ENCODE measurements at regions of chr13 and their contacts with region 1.

Region 1: DNA sequence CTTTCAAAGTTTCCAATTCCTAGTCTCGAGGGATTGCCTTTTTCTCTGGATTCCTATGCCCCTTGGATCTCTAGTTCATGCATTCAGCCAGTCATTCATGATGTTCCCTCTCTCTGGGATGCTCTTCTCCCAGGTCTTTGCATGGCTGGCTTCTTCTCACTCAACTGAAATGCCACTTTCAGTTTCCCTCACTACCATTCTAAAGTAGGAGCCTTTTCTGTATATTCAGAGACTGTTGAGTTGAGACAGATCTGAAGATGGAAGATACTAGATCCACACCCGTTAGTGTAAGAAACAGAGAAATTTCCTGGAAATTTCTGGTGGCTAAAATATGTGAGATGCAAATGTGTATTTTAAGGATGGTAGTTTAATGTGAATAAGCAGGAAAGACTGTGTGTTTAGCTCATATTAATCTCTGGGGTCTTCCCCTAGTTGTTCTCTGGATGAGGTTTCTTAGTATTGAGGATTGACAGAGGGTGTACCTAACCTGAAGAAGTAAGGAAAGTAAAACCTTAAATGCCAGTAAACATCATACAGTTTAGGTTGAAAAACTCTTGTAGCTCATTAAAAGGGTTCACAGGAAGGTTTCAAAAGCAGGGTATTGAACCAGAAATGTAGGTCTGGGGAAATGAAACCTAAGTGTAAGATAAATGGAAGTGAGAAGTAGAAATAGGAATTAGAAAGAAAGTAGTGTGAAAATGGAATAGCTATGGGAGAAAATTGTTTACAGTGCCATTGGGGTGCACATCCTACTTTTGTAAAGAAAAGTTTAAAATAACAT is 331.3 kb downstream of the NDFIP2 start:
- DNase-seq: peak; percentile 39
- ATAC-seq: peak; percentile 90
- H3K4me3 ChIP-seq: no peak overlapping the region
- H3K27ac ChIP-seq: peak overlapping the region; percentile 44
- H3K4me1 ChIP-seq: peaks cover 4% of the 10 kb centered on the region
- H3K27me3 ChIP-seq: no peaks in the 10 kb centered on the region
- CTCF ChIP-seq: no peak
- EP300 ChIP-seq: peak in 1 of 2 experiments; percentile 79; a peak in 2 of 4 replicates
- POLR2A ChIP-seq: no peak
- RAD21 ChIP-seq: no peak

Region 2: GRCh38 chr13:79667771-79668170 is 144.5 kb before region 1 on chr13:
- CTCF ChIA-PET with region 1: no interaction called
- POLR2A ChIA-PET with region 1: no interaction called
- RAD21 ChIA-PET with region 1: no interaction called
- SMC1A ChIA-PET with region 1: no interaction called
- in situ Hi-C with region 1: no loop called
- intact Hi-C with region 1: no loop called
- DNase-seq: no peak
- ATAC-seq: no peak
- H3K4me3 ChIP-seq: no peak overlapping the region
- H3K27ac ChIP-seq: no peak overlapping the region
- H3K4me1 ChIP-seq: no peaks in the 10 kb centered on the region
- H3K27me3 ChIP-seq: no peaks in the 10 kb centered on the region
- CTCF ChIP-seq: no peak
- EP300 ChIP-seq: no peak
- POLR2A ChIP-seq: no peak
- RAD21 ChIP-seq: no peak

Region 3: DNA sequence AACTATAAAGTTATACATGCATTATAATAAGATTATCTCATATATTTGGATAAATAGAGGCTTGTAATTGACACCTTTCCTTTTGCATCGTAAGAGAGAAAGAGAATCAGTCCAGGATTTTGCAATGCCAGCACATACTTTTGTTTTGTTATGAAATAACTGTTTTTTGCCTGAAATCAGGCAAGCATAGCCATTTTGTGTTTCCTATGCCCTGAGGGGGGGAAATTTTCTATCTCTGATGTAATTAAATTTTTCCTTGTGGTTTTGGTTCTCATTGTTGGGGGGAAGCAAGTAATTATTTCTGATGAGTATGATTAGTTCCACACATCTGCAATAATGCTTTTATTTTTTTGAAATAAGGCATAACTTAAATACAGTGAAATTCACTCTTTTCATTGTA is 101.9 kb before region 1 on chr13:
- CTCF ChIA-PET with region 1: no interaction called
- POLR2A ChIA-PET with region 1: no interaction called
- RAD21 ChIA-PET with region 1: no interaction called
- SMC1A ChIA-PET with region 1: no interaction called
- in situ Hi-C with region 1: no loop called
- intact Hi-C with region 1: no loop called
- DNase-seq: no peak
- ATAC-seq: no peak
- H3K4me3 ChIP-seq: no peak overlapping the region
- H3K27ac ChIP-seq: no peak overlapping the region
- H3K4me1 ChIP-seq: no peaks in the 10 kb centered on the region
- H3K27me3 ChIP-seq: no peaks in the 10 kb centered on the region; a peak in 1 of 4 replicates
- CTCF ChIP-seq: no peak
- EP300 ChIP-seq: no peak
- POLR2A ChIP-seq: no peak
- RAD21 ChIP-seq: no peak

Region 4: GRCh38 chr13:79782541-79783205 is 29.6 kb before region 1 on chr13:
- CTCF ChIA-PET with region 1: interaction called, 4 read pairs
- POLR2A ChIA-PET with region 1: interaction called, 4 read pairs
- RAD21 ChIA-PET with region 1: interaction called, 32 read pairs
- SMC1A ChIA-PET with region 1: interaction called, 21 read pairs
- in situ Hi-C with region 1: no loop called
- intact Hi-C with region 1: no loop called
- DNase-seq: no peak
- ATAC-seq: peak; percentile 88
- H3K4me3 ChIP-seq: no peak overlapping the region
- H3K27ac ChIP-seq: no peak overlapping the region
- H3K4me1 ChIP-seq: no peaks in the 10 kb centered on the region
- H3K27me3 ChIP-seq: no peaks in the 10 kb centered on the region
- CTCF ChIP-seq: no peak
- EP300 ChIP-seq: peak in 1 of 2 experiments; percentile 62; a peak in 1 of 4 replicates
- POLR2A ChIP-seq: no peak
- RAD21 ChIP-seq: no peak

Region 5: DNA sequence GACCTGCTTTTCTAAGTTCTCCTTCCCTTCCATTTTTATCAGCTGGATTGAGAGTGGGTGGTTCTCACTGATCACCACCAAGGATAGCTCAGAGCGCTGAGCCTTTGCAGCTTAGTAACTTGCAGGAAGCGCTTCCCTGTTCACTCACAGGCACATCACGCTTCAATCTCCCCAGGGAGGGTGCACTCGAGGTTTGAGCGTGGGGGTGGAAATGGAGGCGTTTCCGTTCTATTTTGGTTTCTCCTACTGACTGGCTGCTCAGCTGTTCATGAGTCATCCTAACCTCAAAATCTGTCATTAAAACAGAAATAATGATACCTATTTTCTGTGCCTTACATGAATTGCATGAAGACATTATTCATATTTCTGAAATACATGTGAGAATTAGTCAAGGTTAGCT is 236.5 kb after region 1 on chr13:
- CTCF ChIA-PET with region 1: interaction called, 5 read pairs
- POLR2A ChIA-PET with region 1: no interaction called
- RAD21 ChIA-PET with region 1: interaction called, 24 read pairs
- SMC1A ChIA-PET with region 1: interaction called, 11 read pairs
- in situ Hi-C with region 1: no loop called
- intact Hi-C with region 1: no loop called
- DNase-seq: peak; percentile 89
- ATAC-seq: peak; percentile 98
- H3K4me3 ChIP-seq: no peak overlapping the region
- H3K27ac ChIP-seq: peak overlapping the region; percentile 18; the same call in 1 of the 2 replicates
- H3K4me1 ChIP-seq: peaks cover 21% of the 10 kb centered on the region
- H3K27me3 ChIP-seq: no peaks in the 10 kb centered on the region
- CTCF ChIP-seq: no peak
- EP300 ChIP-seq: peak; percentile 94 to 98
- POLR2A ChIP-seq: no peak
- RAD21 ChIP-seq: no peak

Region 6: GRCh38 chr13:80337288-80338081 is 525.2 kb after region 1 on chr13:
- CTCF ChIA-PET with region 1: interaction called, 5 read pairs
- POLR2A ChIA-PET with region 1: no interaction called
- RAD21 ChIA-PET with region 1: interaction called, 15 read pairs
- SMC1A ChIA-PET with region 1: interaction called, 7 read pairs
- in situ Hi-C with region 1: no loop called
- intact Hi-C with region 1: no loop called
- DNase-seq: no peak
- ATAC-seq: no peak
- H3K4me3 ChIP-seq: no peak overlapping the region
- H3K27ac ChIP-seq: no peak overlapping the region
- H3K4me1 ChIP-seq: no peaks in the 10 kb centered on the region
- H3K27me3 ChIP-seq: no peaks in the 10 kb centered on the region; a peak in 1 of 4 replicates
- CTCF ChIP-seq: no peak
- EP300 ChIP-seq: no peak
- POLR2A ChIP-seq: no peak
- RAD21 ChIP-seq: no peak

Region 7: GRCh38 chr13:80454245-80454644 is 642.0 kb after region 1 on chr13:
- CTCF ChIA-PET with region 1: no interaction called
- POLR2A ChIA-PET with region 1: no interaction called
- RAD21 ChIA-PET with region 1: no interaction called
- SMC1A ChIA-PET with region 1: no interaction called
- in situ Hi-C with region 1: no loop called
- intact Hi-C with region 1: loop called (anchors 10 kb)
- DNase-seq: peak; percentile 34
- ATAC-seq: peak; percentile 85
- H3K4me3 ChIP-seq: no peak overlapping the region
- H3K27ac ChIP-seq: no peak overlapping the region
- H3K4me1 ChIP-seq: no peaks in the 10 kb centered on the region
- H3K27me3 ChIP-seq: no peaks in the 10 kb centered on the region
- CTCF ChIP-seq: no peak
- EP300 ChIP-seq: peak; percentile 88 to 92
- POLR2A ChIP-seq: no peak
- RAD21 ChIP-seq: no peak